Activated CD4-positive, alpha-beta memory T cell treated with anti-CD3 and anti-CD28 coated beads for 36 hours (primary cell): ENCODE measurements at regions of chr18 and their contacts with region 1.

Region 1: GRCh38 chr18:57803103-57803969 is at the start of gene ATP8B1:
- DNase-seq: no peak
- H3K4me3 Mint-ChIP-seq: peak within 1 kb of the TSS; percentile 52
- H3K27ac Mint-ChIP-seq: no peak within 1 kb of the TSS
- H3K4me1 Mint-ChIP-seq: peaks cover 10% of the 10 kb centered on the region
- H3K27me3 Mint-ChIP-seq: peaks cover 40% of the 10 kb centered on the region
- total RNA-seq, gene ATP8B1: not detected

Region 2: GRCh38 chr18:57841568-57841967 is 38.2 kb after region 1 on chr18:
- CTCF ChIA-PET with region 1: no interaction called
- POLR2A ChIA-PET with region 1: no interaction called
- intact Hi-C with region 1: loop called (anchors 5 kb)
- DNase-seq: peak; percentile 28
- H3K4me3 Mint-ChIP-seq: no peak overlapping the region
- H3K27ac Mint-ChIP-seq: peak overlapping the region; percentile 18
- H3K4me1 Mint-ChIP-seq: peaks cover 25% of the 10 kb centered on the region
- H3K27me3 Mint-ChIP-seq: peaks cover 40% of the 10 kb centered on the region

Region 3: GRCh38 chr18:58080451-58080850 is 277.1 kb after region 1 on chr18:
- CTCF ChIA-PET with region 1: no interaction called
- POLR2A ChIA-PET with region 1: no interaction called
- intact Hi-C with region 1: no loop called
- DNase-seq: no peak
- H3K4me3 Mint-ChIP-seq: no peak overlapping the region
- H3K27ac Mint-ChIP-seq: no peak overlapping the region
- H3K4me1 Mint-ChIP-seq: no peaks in the 10 kb centered on the region
- H3K27me3 Mint-ChIP-seq: peaks cover 13% of the 10 kb centered on the region